Vagina (tissue), 2 donors: ENCODE measurements at regions of chr7 and their contacts with region 1.

Region 1: GRCh38 chr7:76257973-76258372 is 44.5 kb upstream of the HSPB1 start:
- DNase-seq: no peak
- H3K4me3 ChIP-seq: no peak overlapping the region
- H3K27ac ChIP-seq: no peak overlapping the region
- H3K4me1 ChIP-seq: peaks cover 12% of the 10 kb centered on the region
- H3K27me3 ChIP-seq: peaks cover 4% of the 10 kb centered on the region
- CTCF ChIP-seq: no peak
- POLR2A ChIP-seq: no peak

Region 2: GRCh38 chr7:75711656-75712514 is 546.1 kb before region 1 on chr7:
- intact Hi-C with region 1: loop called (anchors 10 kb)
- DNase-seq: no peak
- H3K4me3 ChIP-seq: no peak overlapping the region
- H3K27ac ChIP-seq: peak overlapping the region; percentile 22
- H3K4me1 ChIP-seq: peaks cover 8% of the 10 kb centered on the region
- H3K27me3 ChIP-seq: no peaks in the 10 kb centered on the region
- CTCF ChIP-seq: no peak
- POLR2A ChIP-seq: no peak

Region 3: DNA sequence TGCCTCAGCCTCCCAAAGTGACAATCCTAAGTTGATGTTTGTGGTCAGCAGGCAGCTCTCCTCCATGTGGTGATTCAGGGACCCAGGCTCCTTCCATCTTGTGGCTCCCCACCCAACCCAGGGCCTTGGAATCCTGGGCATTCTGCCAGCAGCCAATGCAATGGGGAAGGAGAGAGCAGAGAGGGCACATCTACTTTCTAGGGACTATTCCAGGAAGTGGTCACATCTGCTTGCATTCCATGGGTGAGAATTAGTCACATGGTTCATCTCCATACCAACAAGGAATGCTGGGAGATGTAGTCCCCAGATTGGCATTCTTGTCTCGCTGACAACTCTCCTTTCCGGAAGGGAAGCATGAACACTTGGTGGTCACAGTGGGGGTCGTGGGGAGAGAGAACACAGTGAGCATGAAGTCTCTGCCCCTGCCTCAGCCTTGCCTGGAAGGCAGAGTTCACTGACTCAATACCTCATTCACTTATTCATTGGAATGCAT is 66.1 kb before region 1 on chr7:
- intact Hi-C with region 1: no loop called
- DNase-seq: no peak
- H3K4me3 ChIP-seq: no peak overlapping the region
- H3K27ac ChIP-seq: no peak overlapping the region
- H3K4me1 ChIP-seq: no peaks in the 10 kb centered on the region
- H3K27me3 ChIP-seq: no peaks in the 10 kb centered on the region
- CTCF ChIP-seq: no peak
- POLR2A ChIP-seq: no peak

Region 4: DNA sequence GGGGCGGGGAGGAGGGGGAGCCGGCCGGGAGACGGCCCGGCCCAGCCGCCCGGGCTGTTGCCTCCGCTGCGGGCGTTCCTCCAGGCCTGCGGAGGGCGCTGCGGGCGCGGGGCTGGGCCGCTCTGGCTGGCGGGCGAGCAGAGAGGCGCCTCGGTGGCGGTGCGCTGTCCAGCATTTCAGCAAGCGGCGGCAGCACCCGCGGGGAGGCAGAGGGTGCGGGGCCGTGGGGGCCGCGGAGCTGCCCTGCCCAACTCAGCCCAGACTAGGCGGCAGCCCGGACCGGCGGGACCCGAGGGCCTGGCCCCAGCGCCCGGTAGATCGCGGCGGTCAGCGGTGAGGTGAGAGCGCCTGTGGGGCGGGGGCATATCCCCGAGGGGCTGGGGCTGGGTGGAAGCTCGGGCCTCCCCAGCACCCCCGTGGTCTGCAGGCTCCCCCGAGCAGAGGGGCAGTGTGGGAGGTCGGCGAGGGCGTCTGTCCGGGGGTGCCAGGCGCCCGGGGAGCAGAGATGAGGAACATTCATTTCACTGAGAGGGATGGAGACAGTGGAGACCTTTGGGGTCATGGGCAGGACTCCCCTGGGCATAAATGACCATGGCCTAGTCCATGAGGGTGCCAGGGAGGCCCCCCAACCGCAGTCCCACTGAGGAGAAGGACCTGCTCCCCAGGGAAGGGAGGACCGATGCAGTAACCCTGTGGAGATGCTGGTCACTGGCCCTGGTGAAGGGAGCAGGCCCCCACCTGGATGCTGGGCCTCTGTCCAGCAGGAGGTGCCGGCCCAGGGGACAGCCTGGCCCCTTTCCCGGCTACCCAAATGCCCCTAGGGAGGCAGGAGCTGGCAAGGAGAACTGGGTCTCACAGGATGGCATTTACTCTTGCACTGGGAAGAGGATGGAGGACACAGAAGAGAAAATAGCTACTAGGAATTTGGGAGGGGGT is 56.0 kb before region 1 on chr7 and contains the start of gene SRRM3:
- intact Hi-C with region 1: no loop called
- DNase-seq: no peak
- H3K4me3 ChIP-seq: no peak within 1 kb of the TSS
- H3K27ac ChIP-seq: no peak within 1 kb of the TSS
- H3K4me1 ChIP-seq: no peaks in the 10 kb centered on the region
- H3K27me3 ChIP-seq: no peaks in the 10 kb centered on the region
- CTCF ChIP-seq: peak in 1 of 3 experiments; percentile 31
- POLR2A ChIP-seq: no peak
- total RNA-seq, gene SRRM3: 9.8 TPM

Region 5: DNA sequence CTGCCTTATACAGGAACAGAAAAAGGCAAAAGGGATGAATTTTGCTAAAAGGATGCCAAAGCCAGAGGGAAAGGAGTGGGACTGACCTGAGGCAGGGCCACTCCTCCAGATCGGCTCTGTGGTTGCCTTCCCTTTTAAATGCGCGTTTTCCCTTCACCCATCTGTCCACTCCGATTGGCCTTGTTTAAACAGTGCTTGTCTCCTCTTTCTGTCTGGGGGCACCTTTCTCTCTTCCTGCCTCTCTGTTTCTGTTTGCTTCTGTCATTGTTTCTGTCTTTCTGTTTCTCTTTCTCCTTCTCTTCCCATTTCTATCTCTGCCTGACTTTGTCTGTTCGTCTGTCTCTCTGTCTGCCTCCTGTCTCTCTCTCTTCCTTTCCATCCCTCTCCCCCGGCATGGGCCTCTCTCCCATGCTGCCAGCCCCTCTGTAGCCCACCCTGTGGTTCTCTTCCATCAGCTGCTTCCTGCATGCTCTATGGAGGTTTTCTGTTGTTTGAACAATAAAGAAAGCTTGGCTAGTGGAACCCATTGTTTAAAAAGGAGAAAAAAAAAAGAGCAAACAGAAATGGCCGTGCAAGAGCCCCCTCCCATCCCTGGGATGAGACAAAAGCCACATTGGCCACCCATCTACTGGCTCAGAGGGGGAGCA is 15.0 kb after region 1 on chr7:
- intact Hi-C with region 1: no loop called
- DNase-seq: no peak
- H3K4me3 ChIP-seq: no peak overlapping the region
- H3K27ac ChIP-seq: no peak overlapping the region
- H3K4me1 ChIP-seq: peaks cover 3% of the 10 kb centered on the region
- H3K27me3 ChIP-seq: no peaks in the 10 kb centered on the region
- CTCF ChIP-seq: no peak
- POLR2A ChIP-seq: no peak